Mammary epithelial cell (primary cell): ENCODE measurements at regions of chr4 and their contacts with region 1.

Region 1: DNA sequence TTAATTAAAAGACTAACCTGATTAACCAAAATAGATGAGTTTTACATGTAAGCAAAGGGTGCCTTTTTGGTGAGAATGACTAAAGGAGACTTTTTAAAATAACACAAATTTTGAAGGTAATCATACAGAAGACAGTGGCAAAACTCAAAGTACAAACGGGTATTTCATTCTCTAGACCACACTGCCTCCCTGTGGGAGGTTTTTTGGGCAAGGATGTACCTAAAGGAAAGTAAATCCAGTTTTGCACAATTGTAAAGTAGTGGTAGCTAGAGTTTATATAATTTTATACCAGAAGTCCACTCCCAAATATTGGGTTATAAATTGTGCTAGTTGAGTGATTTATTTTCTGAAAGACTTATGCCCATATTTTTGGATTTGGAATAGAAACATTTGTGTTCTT is 201.0 kb downstream of the PAPSS1 start:
- DNase-seq: peak; percentile 8
- H3K4me3 ChIP-seq: no peak overlapping the region
- H3K27ac ChIP-seq: no peak overlapping the region
- H3K4me1 ChIP-seq: no peaks in the 10 kb centered on the region
- H3K27me3 ChIP-seq: no peaks in the 10 kb centered on the region
- CTCF ChIP-seq: peak; percentile 44 to 66

Region 2: DNA sequence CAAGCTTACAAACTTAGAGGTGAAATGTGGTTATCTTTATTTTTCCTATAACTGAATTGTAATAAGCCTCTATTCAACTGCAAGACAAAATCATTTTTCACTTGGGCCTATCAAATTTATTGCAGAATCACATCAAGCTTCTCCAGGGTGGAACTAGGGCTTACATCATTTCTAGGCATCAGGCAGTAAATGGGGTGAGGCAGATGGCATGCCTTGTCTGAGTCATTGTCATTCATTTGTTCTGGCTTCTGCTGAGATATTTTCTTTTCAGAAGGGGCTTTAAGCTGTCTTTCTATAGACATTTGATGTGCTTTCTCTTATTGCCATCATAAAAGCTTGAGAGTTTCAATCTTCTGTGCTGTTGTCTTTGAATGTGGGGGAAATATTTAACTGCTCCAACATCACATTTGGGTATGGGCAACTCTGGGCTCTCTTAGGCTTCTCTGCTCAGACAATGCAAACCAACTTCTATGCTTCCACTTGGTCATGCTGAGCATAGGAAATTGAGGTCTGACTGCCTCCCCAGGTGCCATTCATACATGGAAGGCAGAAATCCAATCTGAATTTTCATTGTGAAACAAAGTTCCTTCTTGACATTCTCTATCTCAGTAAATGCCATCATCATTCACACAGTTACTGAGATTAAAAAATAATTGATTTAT is 924.6 kb before region 1 on chr4:
- CTCF ChIA-PET with region 1: no interaction called
- dilution Hi-C with region 1: no loop called
- in situ Hi-C with region 1: no loop called
- intact Hi-C with region 1: no loop called
- DNase-seq: peak; percentile 34
- H3K4me3 ChIP-seq: no peak overlapping the region
- H3K27ac ChIP-seq: no peak overlapping the region
- H3K4me1 ChIP-seq: peaks cover 3% of the 10 kb centered on the region
- H3K27me3 ChIP-seq: no peaks in the 10 kb centered on the region
- CTCF ChIP-seq: no peak

Region 3: GRCh38 chr4:107050525-107051135 is 468.4 kb before region 1 on chr4:
- CTCF ChIA-PET with region 1: no interaction called
- dilution Hi-C with region 1: no loop called
- in situ Hi-C with region 1: no loop called
- intact Hi-C with region 1: loop called (anchors 1 kb)
- DNase-seq: no peak
- H3K4me3 ChIP-seq: no peak overlapping the region
- H3K27ac ChIP-seq: no peak overlapping the region
- H3K4me1 ChIP-seq: no peaks in the 10 kb centered on the region
- H3K27me3 ChIP-seq: no peaks in the 10 kb centered on the region
- CTCF ChIP-seq: peak; percentile 74 to 78

Region 4: DNA sequence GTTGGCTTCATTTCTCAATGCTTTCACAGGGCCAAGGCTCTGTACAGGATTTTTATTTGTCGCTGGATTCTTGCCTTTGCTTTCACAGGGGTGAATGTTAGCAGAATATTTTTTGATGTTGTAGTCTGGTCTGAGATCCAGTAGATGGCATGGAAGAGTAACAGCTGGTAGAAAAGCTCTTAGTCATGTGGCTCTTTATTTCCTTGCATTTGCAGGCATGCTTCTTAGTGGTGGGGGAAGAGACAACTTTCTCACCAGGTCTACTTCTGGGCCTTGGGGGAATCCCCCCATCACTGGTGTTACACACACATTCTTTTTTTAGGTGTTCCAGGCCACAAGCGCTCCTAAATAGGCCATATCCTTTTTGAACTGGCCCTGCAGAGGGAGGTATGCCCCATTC is 424.7 kb before region 1 on chr4:
- CTCF ChIA-PET with region 1: no interaction called
- dilution Hi-C with region 1: no loop called
- in situ Hi-C with region 1: no loop called
- intact Hi-C with region 1: loop called (anchors 1 kb)
- DNase-seq: peak; percentile 11
- H3K4me3 ChIP-seq: no peak overlapping the region
- H3K27ac ChIP-seq: no peak overlapping the region
- H3K4me1 ChIP-seq: no peaks in the 10 kb centered on the region
- H3K27me3 ChIP-seq: no peaks in the 10 kb centered on the region
- CTCF ChIP-seq: peak; percentile 39 to 67

Region 5: DNA sequence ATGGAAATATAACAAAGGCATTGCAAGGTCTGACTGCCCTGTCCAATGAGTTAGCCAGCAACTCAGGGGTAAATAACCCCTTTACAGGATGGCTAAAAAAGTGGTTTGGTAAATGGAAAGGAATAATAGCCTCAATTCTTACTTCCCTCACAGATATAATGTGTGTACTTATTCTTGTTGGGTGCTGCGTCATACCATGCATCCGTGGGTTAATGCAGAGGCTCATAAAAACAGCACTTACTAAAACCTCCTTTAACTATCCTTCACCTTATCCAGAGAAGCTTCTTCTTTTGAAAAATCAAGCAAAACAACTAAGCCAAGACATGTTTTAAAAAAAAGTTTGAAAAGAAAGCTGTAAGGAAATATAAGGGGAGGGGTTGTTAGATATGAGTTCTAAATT is 100.0 kb before region 1 on chr4:
- CTCF ChIA-PET with region 1: no interaction called
- dilution Hi-C with region 1: no loop called
- in situ Hi-C with region 1: no loop called
- intact Hi-C with region 1: no loop called
- DNase-seq: no peak
- H3K4me3 ChIP-seq: no peak overlapping the region
- H3K27ac ChIP-seq: no peak overlapping the region
- H3K4me1 ChIP-seq: no peaks in the 10 kb centered on the region
- H3K27me3 ChIP-seq: no peaks in the 10 kb centered on the region
- CTCF ChIP-seq: no peak

Region 6: DNA sequence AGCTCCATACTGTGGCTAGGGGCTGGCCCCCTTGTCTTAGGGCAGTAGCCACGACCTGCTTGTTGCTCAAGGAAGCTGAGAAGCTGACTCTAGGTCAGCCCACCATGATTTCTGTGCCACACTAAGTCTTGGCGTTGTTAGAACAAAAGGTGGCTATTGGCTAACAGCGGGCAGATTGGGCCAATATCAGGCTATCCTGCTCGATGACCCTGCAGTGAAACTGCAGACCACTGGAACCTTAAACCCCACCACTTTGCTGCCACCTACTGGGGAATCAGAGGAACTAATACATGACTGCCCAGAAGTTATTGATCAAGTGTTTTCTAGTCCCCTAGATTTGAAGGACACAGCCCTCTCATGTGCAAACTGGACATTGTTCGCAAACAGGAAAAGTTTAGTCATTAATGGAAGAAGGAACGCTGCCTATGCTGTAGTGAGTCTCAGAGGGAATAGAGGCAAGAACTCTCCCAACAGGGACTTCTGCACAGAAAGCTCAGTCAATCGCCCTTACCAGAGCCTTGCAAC is 217.9 kb after region 1 on chr4:
- CTCF ChIA-PET with region 1: no interaction called
- dilution Hi-C with region 1: no loop called
- in situ Hi-C with region 1: no loop called
- intact Hi-C with region 1: loop called (anchors 10 kb)
- DNase-seq: no peak
- H3K4me3 ChIP-seq: no peak overlapping the region
- H3K27ac ChIP-seq: no peak overlapping the region
- H3K4me1 ChIP-seq: no peaks in the 10 kb centered on the region
- H3K27me3 ChIP-seq: no peaks in the 10 kb centered on the region
- CTCF ChIP-seq: peak; percentile 79 to 83